ENCODE measurements at regions of chr4 and their contacts with region 1.

Region 1: GRCh38 chr4:135015771-135016170 is 814.2 kb upstream of the PABPC4L start:
- DNase-seq: no peak
- ATAC-seq: no peak

Region 2: GRCh38 chr4:135050086-135050717 is 34.4 kb after region 1 on chr4:
- intact Hi-C with region 1: loop called (anchors 1 kb)
- DNase-seq: no peak
- ATAC-seq: no peak